ENCODE measurements at regions of chr12 and their contacts with region 1.

Region 1: GRCh38 chr12:52924764-52925716 is 20.2 kb upstream of the KRT8 start:
- DNase-seq: peak; percentile 78 to 94
- H3K4me3 ChIP-seq: peak overlapping the region; percentile 53
- H3K27ac ChIP-seq: peak overlapping the region; percentile 100
- H3K4me1 ChIP-seq: peaks cover 80% of the 10 kb centered on the region
- H3K27me3 ChIP-seq: no peaks in the 10 kb centered on the region
- CTCF ChIP-seq: no peak

Region 2: GRCh38 chr12:52884526-52885293 is 40.3 kb before region 1 on chr12:
- CTCF ChIA-PET with region 1: interaction called, 6 read pairs
- POLR2A ChIA-PET with region 1: interaction called, 7 read pairs
- intact Hi-C with region 1: loop called (anchors 1 kb)
- DNase-seq: peak in 1 of 2 experiments; percentile 76
- H3K4me3 ChIP-seq: no peak overlapping the region
- H3K27ac ChIP-seq: no peak overlapping the region
- H3K4me1 ChIP-seq: peaks cover 6% of the 10 kb centered on the region
- H3K27me3 ChIP-seq: no peaks in the 10 kb centered on the region
- CTCF ChIP-seq: peak; percentile 97

Region 3: GRCh38 chr12:52903285-52903854 is 21.7 kb before region 1 on chr12:
- CTCF ChIA-PET with region 1: interaction called, 10 read pairs
- POLR2A ChIA-PET with region 1: interaction called, 354 read pairs
- intact Hi-C with region 1: loop called (anchors 1 kb)
- DNase-seq: no peak
- H3K4me3 ChIP-seq: peak overlapping the region; percentile 97
- H3K27ac ChIP-seq: peak overlapping the region; percentile 93
- H3K4me1 ChIP-seq: peaks cover 69% of the 10 kb centered on the region
- H3K27me3 ChIP-seq: no peaks in the 10 kb centered on the region
- CTCF ChIP-seq: no peak

Region 4: GRCh38 chr12:52956987-52957386 is 31.9 kb after region 1 on chr12:
- CTCF ChIA-PET with region 1: no interaction called
- POLR2A ChIA-PET with region 1: interaction called, 10 read pairs
- intact Hi-C with region 1: no loop called
- DNase-seq: peak in 1 of 2 experiments; percentile 94
- H3K4me3 ChIP-seq: no peak overlapping the region
- H3K27ac ChIP-seq: peak overlapping the region; percentile 65
- H3K4me1 ChIP-seq: peaks cover 24% of the 10 kb centered on the region
- H3K27me3 ChIP-seq: no peaks in the 10 kb centered on the region
- CTCF ChIP-seq: no peak

Region 5: GRCh38 chr12:53123578-53124351 is 198.7 kb after region 1 on chr12:
- CTCF ChIA-PET with region 1: no interaction called
- POLR2A ChIA-PET with region 1: no interaction called
- intact Hi-C with region 1: no loop called
- DNase-seq: no peak
- H3K4me3 ChIP-seq: no peak overlapping the region
- H3K27ac ChIP-seq: no peak overlapping the region
- H3K4me1 ChIP-seq: no peaks in the 10 kb centered on the region
- H3K27me3 ChIP-seq: no peaks in the 10 kb centered on the region
- CTCF ChIP-seq: no peak